ENCODE measurements at regions of chr1 and their contacts with region 1.

Region 1: GRCh38 chr1:9128520-9129265 is at the start of gene GPR157:
- DNase-seq: peak; percentile 79
- ATAC-seq: peak; percentile 75
- H3K4me3 ChIP-seq: peak within 1 kb of the TSS; percentile 94
- H3K27ac ChIP-seq: peak within 1 kb of the TSS; percentile 25
- H3K4me1 ChIP-seq: peaks cover 13% of the 10 kb centered on the region
- H3K27me3 ChIP-seq: no peaks in the 10 kb centered on the region
- CTCF ChIP-seq: no peak; the same call in 1 of the 2 replicates
- total RNA-seq, gene GPR157: 7.3 and 7.9 TPM in 2 replicates

Region 2: DNA sequence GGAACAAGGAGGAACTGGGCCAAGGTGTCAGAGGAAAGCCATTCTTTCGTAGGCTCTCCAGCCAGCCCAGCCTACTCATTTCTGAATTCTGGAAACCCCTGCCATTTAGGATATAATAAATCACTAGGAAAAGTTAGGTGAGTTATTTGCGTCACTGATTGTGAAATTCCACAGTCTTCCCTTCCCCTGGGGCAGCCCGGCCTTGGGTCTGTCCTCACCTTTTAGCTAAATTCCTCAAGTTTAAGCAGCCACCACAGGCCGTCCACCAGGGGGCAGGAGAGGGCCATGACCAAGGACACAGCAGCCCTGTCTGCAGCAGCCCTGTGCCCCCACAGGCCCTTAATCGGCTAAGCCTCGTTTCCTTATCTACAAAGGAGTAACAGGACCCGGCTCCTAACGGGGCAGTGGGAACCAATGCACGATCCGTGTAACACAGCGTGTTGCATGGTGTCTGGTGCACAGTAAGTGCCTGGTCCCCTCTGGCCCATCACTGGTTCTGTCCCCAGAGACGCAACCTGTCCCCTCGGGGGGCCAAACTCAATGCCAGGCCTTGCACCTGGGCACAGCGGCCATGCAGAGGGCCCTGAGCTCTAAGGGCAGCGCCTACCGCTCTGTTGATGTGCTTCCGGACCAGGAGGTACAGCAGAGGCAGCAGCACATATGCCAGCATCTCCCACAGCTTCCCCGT is 17.9 kb before region 1 on chr1:
- CTCF ChIA-PET with region 1: interaction called, 4 read pairs
- POLR2A ChIA-PET with region 1: no interaction called
- intact Hi-C with region 1: loop called (anchors 2 kb)
- DNase-seq: peak; percentile 91
- ATAC-seq: peak; percentile 80
- H3K4me3 ChIP-seq: no peak overlapping the region
- H3K27ac ChIP-seq: peak overlapping the region; percentile 95
- H3K4me1 ChIP-seq: peaks cover 26% of the 10 kb centered on the region
- H3K27me3 ChIP-seq: no peaks in the 10 kb centered on the region
- CTCF ChIP-seq: peak; percentile 94

Region 3: GRCh38 chr1:9473032-9473792 is 344.5 kb after region 1 on chr1:
- CTCF ChIA-PET with region 1: no interaction called
- POLR2A ChIA-PET with region 1: no interaction called
- intact Hi-C with region 1: loop called (anchors 10 kb)
- DNase-seq: peak; percentile 90
- ATAC-seq: peak; percentile 94
- H3K4me3 ChIP-seq: no peak overlapping the region
- H3K27ac ChIP-seq: no peak overlapping the region
- H3K4me1 ChIP-seq: peaks cover 25% of the 10 kb centered on the region
- H3K27me3 ChIP-seq: no peaks in the 10 kb centered on the region
- CTCF ChIP-seq: no peak

Region 4: DNA sequence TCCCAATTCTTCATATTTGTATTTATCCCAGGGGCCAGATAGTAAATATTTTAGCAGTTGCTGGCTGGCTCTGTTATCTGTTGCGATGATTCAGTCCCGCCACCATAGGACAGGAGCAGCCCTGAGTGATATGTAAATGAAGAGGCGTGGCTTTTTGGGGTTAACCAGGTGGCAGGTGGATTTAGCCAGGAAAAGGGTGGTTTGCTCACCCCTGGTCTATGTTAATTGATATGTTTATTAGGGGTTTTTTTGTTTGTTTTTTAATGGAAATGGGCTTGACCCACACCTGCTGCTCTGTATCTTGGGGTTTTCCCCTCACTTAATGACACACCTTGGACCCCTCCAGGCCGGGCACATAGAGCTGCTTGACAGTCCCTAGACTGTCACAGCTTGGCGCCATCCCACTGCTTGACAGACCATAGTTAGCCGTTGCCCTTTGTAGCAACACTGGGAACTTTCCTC is 585.6 kb after region 1 on chr1:
- CTCF ChIA-PET with region 1: no interaction called
- POLR2A ChIA-PET with region 1: no interaction called
- intact Hi-C with region 1: no loop called
- DNase-seq: no peak
- ATAC-seq: no peak
- H3K4me3 ChIP-seq: no peak overlapping the region
- H3K27ac ChIP-seq: no peak overlapping the region
- H3K4me1 ChIP-seq: peaks cover 13% of the 10 kb centered on the region
- H3K27me3 ChIP-seq: no peaks in the 10 kb centered on the region
- CTCF ChIP-seq: no peak

Region 5: DNA sequence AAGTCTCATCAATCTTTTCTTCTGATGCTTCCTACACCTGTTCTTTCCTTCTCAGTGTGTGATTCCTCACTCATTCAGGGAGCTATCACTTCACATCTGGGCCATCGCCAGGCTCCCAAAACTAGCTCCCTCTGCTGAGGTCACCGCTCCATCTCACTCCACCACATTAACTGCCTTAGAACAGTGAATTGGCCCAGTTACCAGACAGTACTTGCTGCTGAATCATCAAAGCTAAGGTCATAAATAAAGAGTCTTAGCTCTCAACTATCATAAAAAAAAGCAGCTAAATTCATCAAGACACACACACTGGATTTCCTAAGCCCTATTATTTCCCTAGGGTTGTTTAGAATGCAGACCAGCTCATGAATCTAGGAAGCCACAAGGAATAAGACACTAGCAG is 1949.9 kb after region 1 on chr1:
- CTCF ChIA-PET with region 1: no interaction called
- POLR2A ChIA-PET with region 1: interaction called, 28 read pairs
- intact Hi-C with region 1: no loop called
- DNase-seq: no peak
- ATAC-seq: no peak
- H3K4me3 ChIP-seq: no peak overlapping the region
- H3K27ac ChIP-seq: no peak overlapping the region
- H3K4me1 ChIP-seq: no peaks in the 10 kb centered on the region
- H3K27me3 ChIP-seq: no peaks in the 10 kb centered on the region
- CTCF ChIP-seq: no peak

Measured in PC-3 (cell line).